Heart left ventricle (tissue), 16 donors: ENCODE measurements at regions of chr12 and their contacts with region 1.

Region 1: DNA sequence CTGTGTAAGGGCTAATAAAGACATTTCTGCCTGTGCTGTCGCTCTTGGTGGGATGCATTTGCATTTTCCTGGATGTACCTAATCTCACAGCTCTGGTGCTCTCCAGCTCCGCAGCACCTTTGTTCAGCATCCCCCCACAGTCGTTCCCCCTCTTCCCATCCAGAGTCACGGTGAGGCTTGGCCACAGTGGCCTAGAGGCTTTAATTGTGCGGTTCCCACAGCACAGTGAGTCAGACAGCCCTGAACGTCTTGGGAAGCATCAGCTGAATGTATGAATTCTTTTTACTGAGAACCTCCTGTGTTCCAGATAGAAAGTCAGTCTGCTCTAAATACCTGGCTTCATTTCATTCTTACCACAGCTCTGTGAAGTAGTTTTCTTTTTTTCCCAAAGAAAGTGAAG is 28.7 kb downstream of the MLXIP start:
- DNase-seq: no peak
- ATAC-seq: peak in 2 of 4 donors; percentile 21 to 35
- H3K4me3 ChIP-seq: no peak overlapping the region
- H3K27ac ChIP-seq: peak overlapping the region in 6 of 12 donors; percentile 7 to 75 (median 34)
- H3K4me1 ChIP-seq: peaks cover 6 to 74% (median 55%) of the 10 kb centered on the region in 12 donors
- H3K27me3 ChIP-seq: no peaks in the 10 kb centered on the region
- CTCF ChIP-seq: no peak
- POLR2A ChIP-seq: no peak

Region 2: DNA sequence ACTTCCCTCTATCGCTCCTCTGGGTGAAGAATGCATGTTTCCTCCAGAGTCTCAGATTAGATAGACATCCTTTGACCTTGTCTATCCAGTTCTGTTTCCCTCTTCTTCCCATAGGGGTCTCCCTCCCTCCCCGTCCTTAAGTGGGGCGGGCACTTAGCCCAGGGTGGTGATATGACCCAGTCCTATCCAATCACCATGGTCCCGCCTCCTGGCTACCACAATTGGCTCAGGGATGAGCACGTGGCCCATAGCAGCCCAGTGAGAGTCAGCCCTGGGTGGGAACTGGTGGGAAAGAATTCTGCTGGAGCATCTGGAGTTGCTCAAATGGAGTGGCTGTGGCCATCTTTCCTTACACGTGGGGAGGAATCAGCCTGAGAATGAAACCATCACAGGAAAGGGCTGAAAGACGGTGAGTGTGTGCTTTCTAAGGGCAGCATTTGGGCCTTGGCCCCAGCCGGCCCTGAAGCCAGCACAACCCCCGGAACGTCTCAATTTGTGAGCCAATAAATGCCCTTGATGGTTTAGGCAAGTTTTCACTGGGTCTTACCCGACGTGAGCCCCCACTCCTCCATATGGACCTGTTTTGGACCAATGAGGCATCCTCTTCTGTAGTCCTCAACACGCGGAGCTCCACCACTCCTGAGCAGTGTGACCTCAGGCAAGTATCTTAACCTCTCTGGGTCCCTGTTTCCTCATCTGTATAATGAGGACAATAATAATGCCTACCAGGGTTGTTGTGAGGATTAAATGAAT is 43.1 kb before region 1 on chr12:
- intact Hi-C with region 1: loop called in 2 of 10 experiments (anchors 5 kb)
- DNase-seq: peak; percentile 88 to 94 (median 91)
- ATAC-seq: peak; percentile 90 to 95 (median 92)
- H3K4me3 ChIP-seq: peak overlapping the region in 6 of 12 donors; percentile 15 to 32 (median 25)
- H3K27ac ChIP-seq: peak overlapping the region; percentile 33 to 89 (median 76)
- H3K4me1 ChIP-seq: peaks cover 0 to 53% (median 34%) of the 10 kb centered on the region in 12 donors
- H3K27me3 ChIP-seq: no peaks in the 10 kb centered on the region
- CTCF ChIP-seq: peak in 11 of 12 donors; percentile 19 to 65 (median 41)
- POLR2A ChIP-seq: no peak

Region 3: DNA sequence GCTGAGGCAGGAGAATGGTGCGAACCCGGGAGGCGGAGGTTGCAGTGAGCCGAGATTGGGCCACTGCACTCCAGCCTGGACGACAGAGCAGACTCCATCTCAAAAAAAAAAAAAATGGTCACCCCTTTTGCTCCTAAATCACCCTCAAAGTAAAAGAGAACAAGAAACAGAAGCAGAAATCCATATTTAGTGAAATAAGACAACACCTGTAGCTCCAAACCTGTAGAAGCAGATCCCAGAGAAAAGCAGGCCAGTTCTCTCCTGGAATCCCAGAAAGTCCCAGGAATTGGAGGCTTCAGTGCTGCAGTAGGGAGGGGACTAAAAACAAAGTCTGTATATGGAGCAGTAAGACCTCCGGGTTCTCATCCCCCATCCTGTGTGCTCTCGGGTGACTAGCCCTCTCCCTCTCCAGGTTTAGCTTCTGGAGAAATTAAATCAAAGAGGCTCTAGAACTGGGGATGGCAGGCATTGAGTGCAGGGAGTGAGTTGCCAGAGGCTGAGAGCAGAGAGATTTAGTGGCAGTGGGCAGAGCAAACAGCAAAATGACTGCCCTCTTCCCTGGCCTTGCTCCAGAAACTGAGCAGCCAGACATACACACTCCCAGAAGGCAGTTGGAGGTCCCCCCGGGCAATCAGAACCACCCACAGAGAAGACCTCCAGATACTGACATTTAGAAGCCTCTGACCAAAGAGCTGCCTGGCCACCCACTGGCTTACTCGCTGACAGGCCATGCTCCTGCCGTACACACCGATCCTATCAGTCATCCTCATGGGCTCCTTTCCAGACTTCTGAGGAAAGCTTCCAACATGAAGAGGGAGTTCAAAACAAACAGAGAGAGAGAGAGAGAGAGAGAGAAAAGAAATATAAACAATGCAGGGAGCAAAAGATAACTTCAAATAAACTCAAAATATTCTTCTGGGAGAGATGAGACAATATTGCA is 35.0 kb before region 1 on chr12:
- intact Hi-C with region 1: loop called in 1 of 10 experiments (anchors 5 kb)
- DNase-seq: peak in 4 of 5 donors; percentile 55 to 81 (median 66)
- ATAC-seq: peak; percentile 79 to 93 (median 89)
- H3K4me3 ChIP-seq: no peak overlapping the region
- H3K27ac ChIP-seq: peak overlapping the region in 10 of 12 donors; percentile 50 to 79 (median 64)
- H3K4me1 ChIP-seq: peaks cover 0 to 25% (median 15%) of the 10 kb centered on the region in 12 donors
- H3K27me3 ChIP-seq: no peaks in the 10 kb centered on the region
- CTCF ChIP-seq: no peak
- POLR2A ChIP-seq: no peak

Region 4: GRCh38 chr12:122215771-122216170 is 108.5 kb after region 1 on chr12:
- intact Hi-C with region 1: no loop called
- DNase-seq: no peak
- ATAC-seq: no peak
- H3K4me3 ChIP-seq: no peak overlapping the region
- H3K27ac ChIP-seq: no peak overlapping the region
- H3K4me1 ChIP-seq: no peaks in the 10 kb centered on the region
- H3K27me3 ChIP-seq: no peaks in the 10 kb centered on the region
- CTCF ChIP-seq: no peak
- POLR2A ChIP-seq: no peak